Activated CD8-positive, alpha-beta T cell treated with anti-CD3 and anti-CD28 coated beads for 36 hours (primary cell): ENCODE measurements at regions of chr3 and their contacts with region 1.

Region 1: DNA sequence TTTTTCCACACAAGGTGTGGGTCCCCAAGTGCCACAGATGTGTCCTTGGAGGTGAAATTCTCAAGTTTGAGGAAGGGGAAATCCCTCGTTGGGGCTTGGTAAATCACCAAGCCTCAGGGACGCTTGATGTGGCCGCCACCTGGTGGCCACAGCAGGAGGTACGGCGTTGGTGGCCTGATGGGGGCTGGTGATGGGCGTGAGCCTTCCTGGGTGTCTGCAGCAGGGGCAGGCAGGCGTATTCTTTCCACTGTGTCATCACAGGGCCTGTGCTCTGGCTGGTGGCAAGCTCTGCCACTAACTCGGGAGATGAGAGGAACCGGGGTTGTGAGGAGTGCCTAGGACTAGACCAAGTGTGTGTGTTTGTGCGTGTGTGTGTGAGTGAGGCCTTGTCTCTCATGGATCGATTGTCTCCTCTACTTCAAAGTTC is 4.2 kb downstream of the ACOX2 start:
- DNase-seq: peak; percentile 90
- ATAC-seq: peak; percentile 98
- H3K4me3 Mint-ChIP-seq: no peak overlapping the region
- H3K27ac Mint-ChIP-seq: peak overlapping the region; percentile 28
- H3K4me1 Mint-ChIP-seq: peaks cover 12% of the 10 kb centered on the region
- H3K27me3 Mint-ChIP-seq: no peaks in the 10 kb centered on the region
- CTCF ChIP-seq: peak; percentile 82

Region 2: GRCh38 chr3:58324391-58325390 is 208.1 kb before region 1 on chr3:
- CTCF ChIA-PET with region 1: interaction called, 14 read pairs
- POLR2A ChIA-PET with region 1: no interaction called
- intact Hi-C with region 1: loop called (anchors 5 kb)
- DNase-seq: peak; percentile 37
- ATAC-seq: peak; percentile 63
- H3K4me3 Mint-ChIP-seq: peak overlapping the region; percentile 2
- H3K27ac Mint-ChIP-seq: peak overlapping the region; percentile 87
- H3K4me1 Mint-ChIP-seq: peaks cover 40% of the 10 kb centered on the region
- H3K27me3 Mint-ChIP-seq: no peaks in the 10 kb centered on the region
- CTCF ChIP-seq: no peak

Region 3: DNA sequence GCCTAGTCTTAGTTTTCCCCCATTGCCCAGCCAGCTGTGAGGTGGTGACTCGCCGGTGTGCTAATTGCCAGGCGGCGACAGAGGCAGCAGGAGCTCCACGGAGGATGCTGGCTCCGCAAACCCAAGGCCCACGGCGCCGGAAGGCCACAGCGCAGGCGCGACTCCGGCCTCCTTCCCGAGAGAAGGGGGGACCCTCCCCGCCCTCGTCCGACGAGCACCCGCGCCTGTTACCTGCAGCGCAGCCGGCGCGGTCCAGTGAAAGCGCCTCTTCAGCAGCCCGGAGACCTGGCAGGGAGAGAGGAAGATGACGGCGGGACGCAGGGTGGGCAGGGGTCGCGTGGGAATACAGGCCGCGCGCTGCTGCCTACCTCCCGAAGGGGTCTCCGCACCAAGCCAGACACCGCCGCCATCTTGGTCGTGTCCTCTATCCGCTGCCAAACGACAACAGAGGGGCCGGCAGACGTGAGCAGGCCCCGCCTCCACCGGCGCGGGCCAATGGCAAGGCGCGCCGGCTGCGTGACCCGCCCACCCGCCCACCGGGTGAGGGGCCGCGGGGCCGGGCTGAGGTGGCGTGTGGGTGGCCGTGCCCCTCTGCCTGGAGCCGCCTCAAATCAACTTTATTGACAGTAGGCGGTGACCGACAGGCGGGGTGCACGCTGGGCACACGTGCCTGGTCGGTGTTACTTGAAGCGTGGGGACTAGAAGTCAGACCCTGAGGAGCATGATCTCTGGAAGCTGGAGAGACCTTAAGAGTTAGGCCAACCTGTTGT is 99.2 kb before region 1 on chr3 and contains the start of gene PDHB:
- CTCF ChIA-PET with region 1: interaction called, 3 read pairs
- POLR2A ChIA-PET with region 1: interaction called, 3 read pairs
- intact Hi-C with region 1: loop called (anchors 10 kb)
- DNase-seq: peak; percentile 91
- ATAC-seq: peak; percentile 97
- H3K4me3 Mint-ChIP-seq: peak within 1 kb of the TSS; percentile 96
- H3K27ac Mint-ChIP-seq: peak within 1 kb of the TSS; percentile 93
- H3K4me1 Mint-ChIP-seq: peaks cover 24% of the 10 kb centered on the region
- H3K27me3 Mint-ChIP-seq: no peaks in the 10 kb centered on the region
- CTCF ChIP-seq: no peak
- total RNA-seq, gene PDHB: 53.9 to 58.8 TPM

Region 4: DNA sequence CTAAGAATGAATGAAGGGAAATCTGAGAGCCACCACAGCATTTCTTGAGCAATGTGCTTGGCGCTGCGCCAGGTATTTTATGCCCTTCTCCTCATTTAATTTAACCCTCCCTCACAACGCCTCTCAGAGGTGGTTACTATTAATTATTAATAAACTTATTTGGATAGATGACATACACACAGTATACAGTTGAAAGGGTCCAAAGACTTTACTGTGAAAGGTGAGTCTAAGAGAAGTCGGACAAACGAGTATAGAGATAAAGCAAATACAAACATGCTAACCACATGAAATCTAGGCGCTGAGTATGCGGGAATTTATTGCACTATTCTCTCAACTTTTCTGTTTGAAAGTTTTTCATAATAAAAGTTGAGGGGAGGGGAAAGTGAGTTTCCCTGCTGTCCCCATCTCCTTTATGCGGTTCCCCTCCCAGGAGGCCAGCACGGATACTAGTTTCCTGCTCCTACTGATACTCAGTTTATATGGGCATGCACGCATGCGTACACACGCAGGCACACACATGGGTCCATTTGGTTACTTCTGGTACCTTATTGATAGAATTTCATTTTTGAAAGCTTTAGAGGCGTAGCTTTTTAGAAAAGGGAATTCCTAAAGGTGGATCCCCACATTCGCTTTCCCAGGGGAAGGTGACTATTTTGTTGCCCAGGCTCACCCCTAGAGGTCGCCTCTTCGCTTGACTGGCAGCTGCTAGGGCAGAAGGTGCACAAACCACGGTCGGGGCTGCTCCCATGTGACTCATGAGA is 69.4 kb before region 1 on chr3:
- CTCF ChIA-PET with region 1: interaction called, 7 read pairs
- POLR2A ChIA-PET with region 1: no interaction called
- intact Hi-C with region 1: loop called (anchors 2 kb)
- DNase-seq: peak; percentile 90
- ATAC-seq: peak; percentile 97
- H3K4me3 Mint-ChIP-seq: peak overlapping the region; percentile 31
- H3K27ac Mint-ChIP-seq: no peak overlapping the region
- H3K4me1 Mint-ChIP-seq: peaks cover 14% of the 10 kb centered on the region
- H3K27me3 Mint-ChIP-seq: no peaks in the 10 kb centered on the region
- CTCF ChIP-seq: peak; percentile 95

Region 5: DNA sequence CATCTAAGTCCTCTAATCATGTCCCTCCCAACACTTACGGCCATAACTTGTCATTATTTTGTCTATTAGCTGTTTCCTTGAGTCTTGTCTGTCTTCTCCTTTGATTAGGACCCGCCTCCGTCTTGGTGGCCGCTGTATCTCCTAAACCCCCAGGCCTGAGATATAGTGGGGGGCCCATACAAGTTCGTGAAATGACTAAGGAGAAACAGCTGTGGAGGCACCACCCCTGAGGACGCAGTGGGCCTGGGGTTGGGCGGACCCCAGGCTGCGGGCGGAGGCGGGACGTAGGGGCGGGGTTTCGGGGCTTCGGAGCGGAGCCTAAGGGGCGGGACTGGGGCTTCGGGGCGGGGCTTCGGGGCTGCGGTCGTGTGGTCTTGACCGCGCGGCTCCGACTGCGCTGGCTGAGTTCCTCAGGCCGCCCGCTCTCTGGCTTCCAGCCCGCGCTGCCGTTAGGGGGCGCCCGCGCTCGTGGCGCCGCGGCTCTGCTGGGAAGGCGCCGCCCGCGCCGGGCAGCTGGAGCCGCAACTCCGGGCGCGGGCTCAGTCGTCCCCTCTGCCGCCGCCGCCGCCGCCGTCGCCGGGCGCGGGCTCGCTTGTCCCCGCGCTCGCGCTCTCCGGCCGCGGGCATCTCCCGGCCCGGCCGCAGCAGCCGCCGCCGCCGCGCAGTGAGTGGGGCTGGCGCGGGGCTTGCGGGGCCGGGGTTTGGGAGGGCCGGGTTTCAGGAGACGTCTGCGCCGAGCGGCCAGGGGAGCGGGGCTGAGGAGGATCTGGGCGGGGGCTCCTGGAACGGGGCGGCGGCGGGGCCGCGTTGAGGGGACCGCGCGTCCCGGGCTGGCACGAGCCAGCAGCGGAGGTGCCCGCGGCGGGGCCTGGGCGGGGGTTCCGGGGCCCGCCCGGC is 41.1 kb before region 1 on chr3 and contains the start of gene KCTD6:
- CTCF ChIA-PET with region 1: interaction called, 4 read pairs
- POLR2A ChIA-PET with region 1: interaction called, 3 read pairs
- intact Hi-C with region 1: loop called (anchors 5 kb)
- DNase-seq: peak; percentile 85
- ATAC-seq: peak; percentile 90
- H3K4me3 Mint-ChIP-seq: peak within 1 kb of the TSS; percentile 81
- H3K27ac Mint-ChIP-seq: peak within 1 kb of the TSS; percentile 89
- H3K4me1 Mint-ChIP-seq: peaks cover 35% of the 10 kb centered on the region
- H3K27me3 Mint-ChIP-seq: peaks cover 2% of the 10 kb centered on the region
- CTCF ChIP-seq: peak; percentile 57
- total RNA-seq, gene KCTD6: 5.6 to 5.8 TPM